ENCODE measurements at regions of chr6 and their contacts with region 1.

Region 1: DNA sequence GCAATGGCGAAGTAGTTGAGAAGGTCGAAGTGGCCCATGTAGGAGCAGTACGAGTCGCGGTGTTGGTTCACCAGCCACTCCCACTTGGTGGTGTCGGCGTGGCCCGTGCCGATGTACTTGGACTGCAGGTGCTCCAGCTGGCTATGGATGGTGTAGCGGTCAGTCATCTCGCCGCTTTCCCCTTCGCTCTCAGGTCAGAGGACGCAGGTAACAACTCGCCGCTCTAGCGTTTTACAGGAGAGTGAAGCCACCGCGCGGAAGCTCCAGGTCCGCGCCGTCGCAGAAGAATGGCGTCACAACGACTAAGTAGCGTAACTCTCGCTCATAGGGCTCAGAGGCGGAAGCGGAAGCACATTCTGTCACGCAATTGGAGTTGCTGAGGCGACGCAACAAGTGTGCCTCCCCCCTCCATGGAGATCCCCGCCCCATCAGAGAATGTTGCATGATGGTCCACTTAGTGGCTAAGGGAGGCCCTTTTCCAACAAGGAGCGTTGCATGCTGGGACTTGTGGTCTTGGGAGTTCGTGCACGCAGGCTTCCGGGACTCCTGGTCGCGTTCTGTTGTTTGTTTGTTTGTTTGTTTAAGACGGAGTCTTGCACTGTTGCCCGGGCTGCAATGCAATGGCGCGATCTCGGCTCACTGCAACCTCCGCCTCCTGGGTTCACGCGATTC is at the start of gene SF3B5:
- DNase-seq: peak; percentile 99
- H3K4me3 Mint-ChIP-seq: peak within 1 kb of the TSS; percentile 95
- H3K27ac Mint-ChIP-seq: peak within 1 kb of the TSS; percentile 92
- H3K4me1 Mint-ChIP-seq: peaks cover 26% of the 10 kb centered on the region
- H3K27me3 Mint-ChIP-seq: peaks cover 2% of the 10 kb centered on the region
- total RNA-seq, gene SF3B5: 214 and 217 TPM in 2 replicates

Region 2: DNA sequence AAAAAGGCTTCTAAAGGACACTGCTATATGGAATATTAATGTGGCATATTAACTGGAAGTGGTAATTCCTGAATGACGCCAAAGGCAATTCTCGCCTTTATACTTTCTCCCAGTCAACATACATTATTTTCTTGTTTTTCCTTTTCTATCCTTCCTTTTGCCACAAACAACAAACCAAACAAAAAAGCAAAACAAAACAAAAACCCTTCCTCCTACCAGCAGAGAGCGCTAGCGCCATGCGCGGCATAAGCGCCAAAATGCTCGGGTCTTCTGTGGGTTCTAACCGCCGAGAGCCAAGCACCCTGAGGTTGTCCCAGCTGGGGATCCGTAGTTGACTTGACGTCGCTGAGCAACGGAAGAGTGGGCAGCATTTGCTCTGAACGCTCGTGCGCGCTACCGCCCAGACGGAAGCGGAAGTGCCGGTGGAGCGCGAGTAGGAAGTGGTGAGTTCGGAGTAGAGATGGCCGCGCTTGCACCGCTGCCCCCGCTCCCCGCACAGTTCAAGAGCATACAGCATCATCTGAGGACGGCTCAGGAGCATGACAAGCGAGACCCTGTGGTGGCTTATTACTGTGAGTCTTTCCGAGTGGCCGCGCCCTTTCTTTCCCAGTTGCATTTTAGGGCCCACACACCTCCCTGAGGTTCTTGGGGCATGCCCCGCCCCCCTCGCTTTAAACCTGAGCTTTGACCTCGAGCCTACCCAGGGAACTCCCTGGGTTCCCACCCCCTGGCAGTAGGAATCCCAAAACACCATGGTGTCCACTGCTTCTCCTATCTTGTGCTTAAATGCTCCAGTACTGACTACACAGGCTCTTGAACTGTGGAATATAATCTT is 1948.4 kb before region 1 on chr6 and contains the starts of genes NMBR and VTA1:
- intact Hi-C with region 1: loop called (anchors 10 kb)
- DNase-seq: peak; percentile 99
- H3K4me3 Mint-ChIP-seq: peak within 1 kb of the TSS; percentile 96
- H3K27ac Mint-ChIP-seq: peak within 1 kb of the TSS; percentile 91
- H3K4me1 Mint-ChIP-seq: peaks cover 40% of the 10 kb centered on the region
- H3K27me3 Mint-ChIP-seq: no peaks in the 10 kb centered on the region
- total RNA-seq, gene NMBR: not detected in 2 replicates
- total RNA-seq, gene VTA1: 52.6 and 54.0 TPM in 2 replicates

Region 3: DNA sequence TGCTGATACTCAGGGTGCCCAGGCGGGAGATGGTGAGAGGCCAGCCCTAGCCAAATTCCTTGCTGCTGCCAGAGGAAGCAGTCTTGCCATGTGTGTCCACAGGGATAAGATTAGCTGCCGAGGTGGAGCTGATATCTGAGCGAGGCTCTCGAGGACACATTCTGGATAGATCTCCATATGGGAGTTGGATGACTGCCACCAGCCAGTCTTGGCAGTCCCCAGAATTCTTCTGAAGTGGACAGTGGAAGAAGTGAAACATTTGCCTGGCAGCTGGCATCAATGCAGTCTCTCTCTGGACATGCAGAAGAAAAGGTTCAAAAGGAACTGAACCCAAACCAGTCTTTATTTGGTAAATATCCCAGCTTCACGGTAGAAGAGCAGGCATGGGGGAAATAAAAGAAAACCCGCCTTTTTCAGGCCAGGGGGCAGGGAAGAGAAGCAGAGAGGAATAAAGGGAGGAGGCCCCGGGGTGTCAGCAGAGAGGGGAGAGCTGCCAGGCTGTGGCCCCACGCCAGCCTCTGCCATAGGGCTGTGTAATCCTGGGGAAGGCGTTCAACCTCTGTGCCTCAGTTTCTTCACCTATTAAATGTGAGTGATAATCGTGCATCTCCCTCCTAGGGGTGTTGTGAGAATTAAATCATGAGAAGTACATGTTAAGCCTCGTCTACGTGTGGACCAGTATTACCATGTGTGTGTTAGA is 580.3 kb before region 1 on chr6:
- intact Hi-C with region 1: no loop called
- DNase-seq: no peak
- H3K4me3 Mint-ChIP-seq: no peak overlapping the region
- H3K27ac Mint-ChIP-seq: no peak overlapping the region
- H3K4me1 Mint-ChIP-seq: peaks cover 34% of the 10 kb centered on the region
- H3K27me3 Mint-ChIP-seq: no peaks in the 10 kb centered on the region

Region 4: DNA sequence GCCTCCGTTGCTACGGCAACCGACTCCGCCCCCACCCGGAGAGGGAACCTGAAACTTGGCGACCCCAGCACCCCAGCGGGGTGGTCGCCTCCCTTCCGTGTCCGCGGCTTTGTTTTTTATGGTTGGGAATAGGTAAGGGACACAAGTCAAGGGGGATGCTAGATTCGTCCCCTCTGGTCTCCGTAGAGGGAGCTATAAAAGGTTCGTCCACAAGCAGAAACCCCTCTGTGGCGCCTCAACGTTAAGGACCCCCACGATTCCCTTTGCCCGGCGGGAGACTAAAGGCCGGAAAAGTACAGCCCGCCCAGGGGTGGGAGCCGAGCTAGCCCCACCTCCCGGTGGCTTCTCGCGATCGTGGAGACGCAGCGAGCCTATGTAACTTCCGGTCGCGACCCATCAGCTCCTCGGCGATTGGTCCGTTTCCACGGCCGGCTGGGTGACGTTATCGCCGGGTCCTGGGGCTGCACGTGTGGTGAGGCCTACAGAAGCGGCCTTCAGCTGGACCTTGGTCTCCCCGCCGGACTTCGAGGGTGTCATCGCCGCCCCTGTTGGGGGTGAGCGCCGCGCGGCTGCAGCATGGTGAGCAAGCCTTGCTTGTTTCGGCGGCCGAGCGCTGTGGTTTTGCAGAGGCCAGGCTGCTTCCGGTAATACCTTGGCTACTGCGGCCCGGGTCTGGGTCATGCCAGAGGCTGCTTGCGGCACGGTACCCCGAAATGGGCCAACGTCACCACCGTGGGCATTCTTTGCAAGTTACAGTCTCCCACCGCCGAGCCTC is 252.4 kb before region 1 on chr6 and contains the start of gene LTV1:
- intact Hi-C with region 1: loop called (anchors 1 kb)
- DNase-seq: peak; percentile 98
- H3K4me3 Mint-ChIP-seq: peak within 1 kb of the TSS; percentile 99
- H3K27ac Mint-ChIP-seq: peak within 1 kb of the TSS; percentile 97
- H3K4me1 Mint-ChIP-seq: peaks cover 19% of the 10 kb centered on the region
- H3K27me3 Mint-ChIP-seq: no peaks in the 10 kb centered on the region
- total RNA-seq, gene LTV1: 61.3 and 63.8 TPM in 2 replicates

Region 5: GRCh38 chr6:144055121-144055931 is 40.1 kb before region 1 on chr6:
- intact Hi-C with region 1: loop called (anchors 2 kb)
- DNase-seq: peak; percentile 86
- H3K4me3 Mint-ChIP-seq: peak overlapping the region; percentile 78
- H3K27ac Mint-ChIP-seq: peak overlapping the region; percentile 94
- H3K4me1 Mint-ChIP-seq: peaks cover 27% of the 10 kb centered on the region
- H3K27me3 Mint-ChIP-seq: no peaks in the 10 kb centered on the region

Region 6: DNA sequence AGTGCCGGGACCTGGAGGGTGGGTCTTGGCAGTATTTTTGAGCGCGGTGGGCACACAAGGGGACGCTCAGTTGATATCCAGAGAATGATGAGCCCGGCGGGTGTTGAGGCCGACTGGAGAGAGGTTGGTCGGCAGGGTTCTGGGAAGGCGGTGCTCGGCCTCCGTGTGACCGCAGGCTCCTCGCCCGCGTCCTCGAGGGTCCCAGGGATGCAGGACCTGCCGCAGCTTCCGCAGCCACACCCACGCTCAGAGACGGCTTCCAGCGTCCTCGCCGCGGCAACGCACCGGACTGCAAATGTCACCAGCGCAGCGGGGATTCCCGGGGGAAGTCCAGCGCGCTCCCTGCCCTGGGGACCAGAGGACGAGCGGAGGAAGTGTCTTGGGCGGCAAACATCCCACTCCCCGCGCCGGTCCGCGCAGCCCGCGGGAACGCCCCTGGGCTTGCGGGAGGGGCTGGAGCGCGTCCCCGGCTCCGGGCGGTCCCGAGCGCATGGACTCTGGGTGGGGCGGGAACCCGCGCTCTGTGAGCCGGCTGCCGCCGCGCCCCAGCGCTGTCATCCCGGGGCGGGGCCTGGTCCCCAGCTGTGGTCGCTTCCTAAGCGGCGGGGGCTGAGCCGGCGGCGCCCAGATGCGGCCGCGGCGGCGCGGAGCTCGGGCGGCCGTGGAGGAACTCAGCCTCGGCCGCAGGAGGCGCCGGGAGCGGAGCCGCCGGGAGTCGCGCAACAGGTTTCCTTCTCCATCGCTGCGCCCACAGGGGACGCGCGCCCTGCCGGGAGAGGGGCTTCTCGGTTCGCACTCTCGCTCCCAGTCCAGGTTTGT is 54.6 kb after region 1 on chr6 and contains the start of gene STX11:
- intact Hi-C with region 1: loop called (anchors 1 kb)
- DNase-seq: peak; percentile 95
- H3K4me3 Mint-ChIP-seq: peak within 1 kb of the TSS; percentile 89
- H3K27ac Mint-ChIP-seq: peak within 1 kb of the TSS; percentile 96
- H3K4me1 Mint-ChIP-seq: peaks cover 41% of the 10 kb centered on the region
- H3K27me3 Mint-ChIP-seq: no peaks in the 10 kb centered on the region
- total RNA-seq, gene STX11: 15.5 and 15.6 TPM in 2 replicates

Region 7: GRCh38 chr6:144343701-144344428 is 248.4 kb after region 1 on chr6:
- intact Hi-C with region 1: loop called (anchors 1 kb)
- DNase-seq: peak; percentile 84
- H3K4me3 Mint-ChIP-seq: peak overlapping the region; percentile 89
- H3K27ac Mint-ChIP-seq: peak overlapping the region; percentile 96
- H3K4me1 Mint-ChIP-seq: peaks cover 59% of the 10 kb centered on the region
- H3K27me3 Mint-ChIP-seq: no peaks in the 10 kb centered on the region